ENCODE measurements at regions of chr20 and their contacts with region 1.

Region 1: GRCh38 chr20:62500237-62500864 is 24.6 kb upstream of the GATA5 start:
- DNase-seq: no peak
- H3K4me3 ChIP-seq: no peak overlapping the region
- CTCF ChIP-seq: peak; percentile 93

Region 2: GRCh38 chr20:62482146-62482809 is 18.1 kb before region 1 on chr20:
- CTCF ChIA-PET with region 1: interaction called, 16 read pairs
- POLR2A ChIA-PET with region 1: no interaction called
- DNase-seq: no peak
- H3K4me3 ChIP-seq: no peak overlapping the region
- CTCF ChIP-seq: no peak

Region 3: DNA sequence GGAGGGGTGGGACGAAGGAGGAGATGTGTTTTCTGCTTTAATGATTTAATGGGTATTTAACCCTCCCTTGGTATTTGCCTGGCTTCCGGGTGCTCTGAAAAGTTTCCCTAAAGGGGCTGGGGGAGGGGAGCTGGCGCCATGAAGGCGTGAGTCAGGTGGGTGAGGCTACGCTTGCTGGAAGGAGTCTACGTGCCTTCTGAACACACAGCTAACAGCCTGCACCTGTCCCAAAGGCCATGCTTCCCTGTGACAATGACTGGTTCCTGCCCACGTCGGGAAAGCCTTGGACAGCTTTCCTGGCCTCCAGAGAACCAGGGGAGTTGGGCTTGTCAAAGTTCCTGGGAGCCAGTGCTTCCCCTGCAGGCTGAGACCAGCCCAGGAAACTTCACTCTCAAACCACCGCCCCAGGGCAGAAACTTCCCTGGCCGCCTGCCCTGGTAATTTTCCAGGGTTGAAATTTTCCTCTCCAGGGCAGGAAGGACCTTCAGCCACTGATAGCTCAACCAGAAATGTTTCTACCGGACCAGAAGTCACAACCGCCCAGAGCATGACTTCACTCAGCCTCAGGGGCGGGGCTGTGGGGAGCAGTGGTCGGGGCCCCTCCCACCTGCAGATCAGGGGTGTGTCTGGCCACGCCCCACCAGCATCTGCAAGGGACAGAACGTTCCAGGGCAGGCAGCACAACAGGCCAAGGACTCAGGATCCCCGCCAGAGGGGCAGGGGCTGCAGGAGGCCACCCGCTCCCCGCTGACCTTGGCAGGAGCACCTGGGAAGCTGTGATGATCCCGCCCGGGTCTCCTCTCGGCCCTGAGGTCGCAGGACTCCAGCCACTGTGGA is 123.4 kb after region 1 on chr20:
- CTCF ChIA-PET with region 1: interaction called, 24 read pairs
- POLR2A ChIA-PET with region 1: no interaction called
- DNase-seq: no peak
- H3K4me3 ChIP-seq: no peak overlapping the region
- CTCF ChIP-seq: no peak